Ascending aorta (tissue), 2 donors: ENCODE measurements at regions of chr4 and their contacts with region 1.

Region 1: DNA sequence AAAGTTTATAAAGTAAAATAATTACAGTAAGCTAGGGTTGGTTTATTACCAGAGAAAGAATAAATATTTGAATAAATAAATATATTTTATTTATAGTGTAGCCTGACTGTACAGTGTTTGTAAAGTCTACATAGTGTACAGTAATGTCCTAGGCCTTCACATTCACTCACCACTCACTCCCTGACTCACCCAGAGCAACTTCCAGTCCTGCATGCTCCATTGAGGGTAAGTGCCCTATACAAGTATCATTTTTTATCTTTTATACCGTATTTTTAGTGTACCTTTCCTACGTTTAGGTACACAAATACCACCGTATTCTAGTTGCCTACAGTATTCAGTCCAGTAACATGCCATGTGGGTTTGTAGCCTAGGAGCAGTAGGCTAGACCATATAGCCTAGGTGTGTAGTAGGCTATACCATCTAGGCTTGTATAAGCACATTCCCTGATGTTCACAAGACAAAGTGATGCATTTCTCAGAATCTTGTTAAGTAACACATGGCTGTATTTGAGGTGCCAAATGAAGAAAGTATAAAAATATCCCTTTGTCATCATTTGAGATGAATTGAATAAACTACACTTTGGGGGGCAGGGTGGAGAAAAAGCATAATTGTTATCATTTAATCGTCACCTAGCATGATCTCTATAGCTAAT is 14.7 kb upstream of the KLHL8 start:
- DNase-seq: no peak
- H3K4me3 ChIP-seq: peak overlapping the region; percentile 50 to 56
- H3K27ac ChIP-seq: no peak overlapping the region
- H3K4me1 ChIP-seq: no peaks in the 10 kb centered on the region
- H3K27me3 ChIP-seq: no peaks in the 10 kb centered on the region
- CTCF ChIP-seq: no peak

Region 2: DNA sequence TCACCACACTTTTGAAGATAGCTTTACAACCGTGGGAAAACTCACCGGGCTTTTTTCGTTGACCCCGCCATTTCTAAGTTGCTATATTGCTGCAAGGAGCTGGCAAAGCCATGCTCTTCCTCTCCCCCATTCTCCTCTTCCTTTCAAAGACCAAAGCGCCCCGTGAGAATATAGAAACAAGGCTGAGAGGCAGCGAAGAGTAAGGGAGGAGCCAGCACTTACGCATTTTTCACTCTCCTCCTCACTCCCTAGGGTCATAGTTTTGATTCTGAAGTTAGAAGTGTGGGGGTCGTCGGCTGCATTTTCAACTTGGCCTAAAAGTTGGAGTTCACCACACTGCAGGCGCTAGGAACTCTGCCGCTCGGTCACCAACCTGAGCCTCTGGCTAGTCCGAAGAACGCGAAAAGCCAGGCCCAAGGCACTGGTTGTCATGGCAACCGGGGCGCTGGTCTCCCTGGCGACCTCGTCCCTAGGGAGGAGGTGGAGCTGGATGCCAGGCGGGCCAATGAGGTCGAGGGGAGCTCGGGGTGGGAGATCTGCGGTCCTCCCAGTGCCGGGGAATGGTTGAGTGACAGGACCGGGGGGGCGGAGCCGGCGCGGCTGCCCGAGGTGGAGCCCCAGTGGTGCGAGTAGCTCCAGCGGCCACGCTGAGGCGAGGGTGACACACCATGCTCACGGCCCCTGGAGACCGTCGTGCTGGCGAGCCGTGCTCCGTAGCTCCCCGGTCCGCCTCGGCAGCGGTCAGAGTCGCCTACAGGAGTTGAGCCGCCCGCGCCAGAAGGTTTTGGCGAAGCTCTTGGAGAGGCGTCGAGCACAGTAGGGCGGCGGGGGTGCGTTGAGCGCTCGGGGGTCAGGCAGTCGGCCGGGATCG is 641.2 kb before region 1 on chr4 and contains the start of gene PTPN13:
- intact Hi-C with region 1: loop called (anchors 10 kb)
- DNase-seq: peak; percentile 95 to 99
- H3K4me3 ChIP-seq: peak within 1 kb of the TSS; percentile 59 to 82
- H3K27ac ChIP-seq: peak within 1 kb of the TSS; percentile 79 to 90
- H3K4me1 ChIP-seq: peaks cover 0 to 4% of the 10 kb centered on the region in 2 donors
- H3K27me3 ChIP-seq: no peaks in the 10 kb centered on the region
- CTCF ChIP-seq: no peak
- total RNA-seq, gene PTPN13: 20.8 TPM

Region 3: GRCh38 chr4:86878640-86879039 is 356.5 kb before region 1 on chr4:
- intact Hi-C with region 1: no loop called
- DNase-seq: no peak
- H3K4me3 ChIP-seq: no peak overlapping the region
- H3K27ac ChIP-seq: no peak overlapping the region
- H3K4me1 ChIP-seq: no peaks in the 10 kb centered on the region
- H3K27me3 ChIP-seq: no peaks in the 10 kb centered on the region
- CTCF ChIP-seq: no peak

Region 4: GRCh38 chr4:87150498-87151261 is 84.5 kb before region 1 on chr4:
- intact Hi-C with region 1: loop called (anchors 1 kb)
- DNase-seq: peak in 1 of 2 donors; percentile 65
- H3K4me3 ChIP-seq: no peak overlapping the region
- H3K27ac ChIP-seq: no peak overlapping the region
- H3K4me1 ChIP-seq: no peaks in the 10 kb centered on the region
- H3K27me3 ChIP-seq: no peaks in the 10 kb centered on the region
- CTCF ChIP-seq: peak; percentile 78 to 91 (median 86)